CD4-positive, alpha-beta T cell (primary cell): ENCODE measurements at regions of chr14 and their contacts with region 1.

Region 1: GRCh38 chr14:68979021-68979782 is at the start of gene ACTN1:
- DNase-seq: peak in 13 of 14 experiments; percentile 31 to 88 (median 57)
- ATAC-seq: peak; percentile 56
- H3K4me3 ChIP-seq: peak within 1 kb of the TSS; percentile 93
- H3K4me3 Mint-ChIP-seq: peak within 1 kb of the TSS; percentile 99
- H3K27ac ChIP-seq: peak within 1 kb of the TSS; percentile 22 to 78
- H3K27ac Mint-ChIP-seq: peak within 1 kb of the TSS; percentile 97
- H3K4me1 ChIP-seq: peaks cover 47% of the 10 kb centered on the region
- H3K4me1 Mint-ChIP-seq: peaks cover 51% of the 10 kb centered on the region
- H3K27me3 ChIP-seq: no peaks in the 10 kb centered on the region
- H3K27me3 Mint-ChIP-seq: no peaks in the 10 kb centered on the region
- CTCF ChIP-seq: no peak
- total RNA-seq, gene ACTN1: 128 to 143 TPM

Region 2: DNA sequence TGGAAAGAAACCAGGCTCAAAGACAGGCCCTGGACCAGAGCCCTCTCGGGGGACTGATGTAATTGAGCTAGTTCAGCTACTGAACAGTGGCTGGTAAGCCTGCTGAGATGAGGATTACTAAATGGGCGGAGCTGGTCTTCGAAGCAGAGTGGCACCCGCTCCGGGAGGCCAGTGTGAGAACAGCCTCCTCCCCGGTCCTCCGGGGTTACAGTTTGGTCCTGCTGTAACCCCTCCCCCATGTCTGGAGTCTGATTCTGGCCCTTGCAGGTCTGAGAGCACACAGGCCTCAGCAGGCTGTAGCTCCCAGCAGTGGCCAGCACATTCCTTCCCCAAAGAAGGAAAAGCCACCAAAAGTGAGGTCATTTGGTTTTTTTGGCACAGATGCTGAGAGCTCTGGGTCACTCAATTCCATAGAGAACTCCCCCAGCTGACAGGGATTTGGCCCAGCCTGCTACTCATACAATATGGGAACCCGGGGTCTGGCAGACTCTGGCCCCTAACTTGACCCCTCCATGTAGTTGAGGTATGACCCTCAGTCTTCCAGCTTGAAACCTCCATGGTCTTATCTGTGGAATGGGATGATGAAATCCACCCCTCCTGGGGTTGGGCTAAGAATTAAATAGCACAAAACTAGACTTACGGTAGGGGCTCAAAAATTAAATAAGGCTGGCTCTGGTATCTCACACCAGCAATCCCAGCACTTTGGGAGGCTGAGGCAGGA is 39.1 kb before region 1 on chr14:
- CTCF ChIA-PET with region 1: no interaction called
- POLR2A ChIA-PET with region 1: interaction called, 7 read pairs
- intact Hi-C with region 1: loop called (anchors 5 kb)
- DNase-seq: no peak
- ATAC-seq: no peak
- H3K4me3 ChIP-seq: no peak overlapping the region
- H3K4me3 Mint-ChIP-seq: no peak overlapping the region
- H3K27ac ChIP-seq: peak overlapping the region in 1 of 2 donors; percentile 18
- H3K27ac Mint-ChIP-seq: peak overlapping the region; percentile 61
- H3K4me1 ChIP-seq: peaks cover 60% of the 10 kb centered on the region
- H3K4me1 Mint-ChIP-seq: peaks cover 85% of the 10 kb centered on the region
- H3K27me3 ChIP-seq: no peaks in the 10 kb centered on the region
- H3K27me3 Mint-ChIP-seq: no peaks in the 10 kb centered on the region
- CTCF ChIP-seq: no peak

Region 3: DNA sequence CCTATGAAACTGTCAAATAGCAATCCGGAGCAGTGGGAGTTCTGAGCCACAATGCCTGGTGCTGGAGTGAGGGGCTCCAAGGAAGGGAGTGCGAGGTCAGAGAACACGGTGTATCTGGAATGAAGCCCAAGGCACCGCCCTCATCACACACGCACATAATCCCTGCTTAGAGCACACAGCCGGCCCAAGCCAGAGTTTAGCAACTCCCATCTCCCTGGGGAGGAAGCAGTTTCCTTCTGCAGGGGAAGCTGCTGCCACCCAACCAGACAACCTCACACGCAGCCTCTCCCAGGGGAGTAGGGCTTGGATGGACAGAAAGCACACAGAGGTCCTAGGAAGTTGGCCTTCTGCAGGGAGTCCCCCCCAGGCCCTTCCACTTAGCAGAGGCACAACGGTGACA is 31.4 kb before region 1 on chr14:
- CTCF ChIA-PET with region 1: no interaction called
- POLR2A ChIA-PET with region 1: interaction called, 7 read pairs
- intact Hi-C with region 1: loop called in 1 of 2 experiments (anchors 5 kb)
- DNase-seq: no peak
- ATAC-seq: no peak
- H3K4me3 ChIP-seq: no peak overlapping the region
- H3K4me3 Mint-ChIP-seq: no peak overlapping the region
- H3K27ac ChIP-seq: no peak overlapping the region
- H3K27ac Mint-ChIP-seq: peak overlapping the region; percentile 95
- H3K4me1 ChIP-seq: peaks cover 79% of the 10 kb centered on the region
- H3K4me1 Mint-ChIP-seq: peaks cover 88% of the 10 kb centered on the region
- H3K27me3 ChIP-seq: no peaks in the 10 kb centered on the region
- H3K27me3 Mint-ChIP-seq: no peaks in the 10 kb centered on the region
- CTCF ChIP-seq: no peak